ENCODE measurements at regions of chr17 and their contacts with region 1.

Region 1: GRCh38 chr17:45021607-45022287 is 29.7 kb downstream of the DCAKD start:
- DNase-seq: peak; percentile 62 to 72
- H3K4me3 ChIP-seq: peak overlapping the region in 1 of 3 donors; percentile 26
- H3K27ac ChIP-seq: peak overlapping the region in 2 of 3 donors; percentile 52 to 71
- H3K4me1 ChIP-seq: peaks cover 28 to 42% of the 10 kb centered on the region in 2 donors
- H3K27me3 ChIP-seq: no peaks in the 10 kb centered on the region
- CTCF ChIP-seq: peak; percentile 28 to 98 (median 84)
- POLR2A ChIP-seq: peak in 1 of 2 donors; percentile 20

Region 2: GRCh38 chr17:44775136-44775837 is 246.5 kb before region 1 on chr17:
- intact Hi-C with region 1: loop called (anchors 5 kb)
- DNase-seq: peak; percentile 97 to 98
- H3K4me3 ChIP-seq: peak overlapping the region in 2 of 3 donors; percentile 19 to 42
- H3K27ac ChIP-seq: no peak overlapping the region
- H3K4me1 ChIP-seq: peaks cover 13 to 22% of the 10 kb centered on the region in 2 donors
- H3K27me3 ChIP-seq: no peaks in the 10 kb centered on the region
- CTCF ChIP-seq: peak in 1 of 6 experiments; percentile 11
- POLR2A ChIP-seq: peak in 1 of 2 donors; percentile 25

Region 3: GRCh38 chr17:44906010-44906646 is 115.6 kb before region 1 on chr17:
- intact Hi-C with region 1: no loop called
- DNase-seq: no peak
- H3K4me3 ChIP-seq: no peak overlapping the region
- H3K27ac ChIP-seq: no peak overlapping the region
- H3K4me1 ChIP-seq: peaks cover 9 to 19% of the 10 kb centered on the region in 2 donors
- H3K27me3 ChIP-seq: no peaks in the 10 kb centered on the region
- CTCF ChIP-seq: no peak
- POLR2A ChIP-seq: no peak

Region 4: GRCh38 chr17:44919885-44920564 is 101.7 kb before region 1 on chr17:
- intact Hi-C with region 1: loop called (anchors 5 kb)
- DNase-seq: peak; percentile 92 to 93
- H3K4me3 ChIP-seq: no peak overlapping the region
- H3K27ac ChIP-seq: no peak overlapping the region
- H3K4me1 ChIP-seq: peaks cover 7 to 34% of the 10 kb centered on the region in 2 donors
- H3K27me3 ChIP-seq: no peaks in the 10 kb centered on the region
- CTCF ChIP-seq: peak; percentile 52 to 93 (median 86)
- POLR2A ChIP-seq: no peak

Region 5: DNA sequence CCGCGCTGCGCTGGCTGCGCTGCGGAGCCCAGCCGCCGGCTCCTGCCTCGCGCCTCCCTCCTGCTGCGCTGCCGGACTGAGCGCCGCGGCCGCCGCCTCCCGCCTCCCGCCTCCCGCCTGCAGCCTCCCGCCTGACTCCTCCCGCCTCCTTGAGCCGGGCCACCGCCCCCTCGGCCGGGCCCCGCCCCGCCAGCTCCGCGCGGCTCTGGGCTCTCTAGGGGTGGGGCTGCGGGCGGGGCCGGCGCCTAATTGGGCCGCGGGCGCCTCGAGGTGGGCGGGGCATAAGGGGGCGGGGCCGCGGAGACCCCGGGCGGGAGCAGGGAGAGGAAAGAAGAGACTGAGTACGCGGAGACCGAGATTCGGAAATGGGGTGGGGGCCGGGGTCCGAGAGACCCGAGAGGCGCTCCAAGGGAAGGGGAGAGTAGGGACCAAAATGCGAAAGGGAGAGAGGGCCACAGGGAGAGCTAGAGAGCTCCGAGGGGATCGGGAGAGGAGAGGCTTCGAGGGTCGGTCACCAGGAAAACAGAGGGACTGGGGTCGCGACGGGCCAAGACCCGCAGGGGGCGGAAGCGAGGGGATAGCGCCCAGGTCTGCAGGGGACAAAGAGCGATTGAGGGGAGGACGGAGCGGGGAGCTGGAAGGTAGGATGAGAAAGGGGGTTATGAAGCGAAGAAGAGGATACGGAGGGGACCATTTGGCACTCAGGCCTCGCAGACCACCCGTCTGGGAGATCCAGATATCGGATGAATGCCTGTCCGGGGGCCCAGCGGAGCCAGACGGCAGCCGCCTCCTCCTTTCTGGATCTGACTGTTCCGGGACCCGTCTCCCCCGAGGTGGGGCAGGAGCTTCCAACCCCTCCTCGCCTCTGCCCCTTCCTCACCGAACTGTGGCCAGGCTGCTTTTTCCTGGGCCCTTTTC is 53.3 kb before region 1 on chr17 and contains the start of gene C1QL1:
- intact Hi-C with region 1: loop called (anchors 10 kb)
- DNase-seq: peak; percentile 90 to 93
- H3K4me3 ChIP-seq: peak within 1 kb of the TSS in 1 of 3 donors; percentile 23
- H3K27ac ChIP-seq: no peak within 1 kb of the TSS
- H3K4me1 ChIP-seq: peaks cover 16 to 35% of the 10 kb centered on the region in 2 donors
- H3K27me3 ChIP-seq: peaks cover 10% of the 10 kb centered on the region
- CTCF ChIP-seq: peak in 1 of 6 experiments; percentile 10
- POLR2A ChIP-seq: peak in 1 of 2 donors; percentile 41
- total RNA-seq, gene C1QL1: 0.59 to 0.75 TPM in 2 of 4 donors, not detected in the others

Region 6: DNA sequence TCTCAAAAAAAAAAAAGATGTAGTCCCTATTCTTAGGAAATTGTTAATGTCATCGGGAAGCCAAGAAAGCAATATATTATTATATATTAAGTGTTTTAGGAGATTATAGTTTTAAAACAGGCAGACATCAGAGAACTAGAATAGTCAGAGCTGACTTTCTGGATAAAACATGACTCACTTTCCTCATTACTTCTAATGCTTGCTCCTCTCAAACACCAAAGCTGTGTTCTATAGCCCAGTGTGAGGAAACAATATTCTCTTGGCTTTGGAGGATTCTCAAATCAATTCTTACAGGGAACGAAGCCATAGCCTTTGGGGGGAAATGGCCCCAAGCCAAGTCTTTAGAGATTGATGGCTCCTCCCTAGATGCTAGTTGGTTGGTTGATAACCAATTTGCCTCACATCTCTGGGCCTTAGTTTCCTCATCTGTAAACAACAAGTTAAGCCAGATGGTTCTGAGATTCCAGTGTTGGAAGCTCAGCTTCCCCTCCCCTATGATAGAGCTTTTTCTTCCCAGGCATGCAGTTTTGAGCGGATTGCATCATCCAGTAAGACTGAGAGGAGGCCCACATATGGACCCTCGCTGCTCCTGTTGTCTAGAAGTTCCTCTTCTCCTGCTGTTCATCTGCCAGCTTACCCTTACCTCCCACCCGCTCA is 51.8 kb after region 1 on chr17:
- intact Hi-C with region 1: no loop called
- DNase-seq: no peak
- H3K4me3 ChIP-seq: no peak overlapping the region
- H3K27ac ChIP-seq: peak overlapping the region in 1 of 3 donors; percentile 17
- H3K4me1 ChIP-seq: peaks cover 17 to 42% of the 10 kb centered on the region in 2 donors
- H3K27me3 ChIP-seq: no peaks in the 10 kb centered on the region
- CTCF ChIP-seq: no peak
- POLR2A ChIP-seq: no peak

Region 7: DNA sequence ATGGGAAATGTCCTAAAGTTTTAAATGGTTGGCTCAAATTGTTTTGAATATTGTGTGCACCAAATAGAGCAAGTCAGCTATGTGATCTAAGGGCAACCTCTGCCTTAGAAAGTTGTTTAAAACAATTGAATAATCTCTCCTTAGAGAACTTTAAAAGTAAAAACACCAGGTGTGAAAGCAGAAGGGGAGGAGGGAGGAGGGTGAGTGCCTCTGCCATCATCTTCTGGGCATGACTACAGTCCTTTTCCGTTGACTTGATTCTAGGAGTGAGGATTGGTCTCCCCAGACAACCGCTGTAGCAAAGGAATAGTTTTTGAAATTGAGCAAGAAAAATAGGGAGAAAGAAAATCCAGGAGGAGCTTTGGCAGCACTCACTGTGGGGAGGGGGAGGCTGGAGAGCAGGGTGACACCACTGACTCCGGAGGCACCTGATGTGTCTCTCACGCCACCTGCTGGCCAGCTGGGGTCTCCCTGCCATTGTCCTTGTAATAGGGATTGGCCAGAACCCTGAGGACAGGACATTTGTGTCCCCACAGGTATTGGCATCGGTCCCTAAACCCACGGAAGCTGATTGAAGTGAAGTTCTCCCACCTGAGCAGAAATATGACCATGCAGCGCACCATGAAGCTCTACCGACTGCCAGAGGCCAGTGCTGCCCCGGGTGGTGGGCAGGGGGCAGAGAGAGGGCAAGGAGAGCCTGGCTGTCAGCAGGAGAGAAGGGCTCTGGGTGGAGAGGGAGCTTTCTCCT is 77.3 kb after region 1 on chr17:
- intact Hi-C with region 1: loop called (anchors 5 kb)
- DNase-seq: peak; percentile 94
- H3K4me3 ChIP-seq: no peak overlapping the region
- H3K27ac ChIP-seq: peak overlapping the region in 1 of 3 donors; percentile 32
- H3K4me1 ChIP-seq: peaks cover 0 to 36% of the 10 kb centered on the region in 2 donors
- H3K27me3 ChIP-seq: no peaks in the 10 kb centered on the region
- CTCF ChIP-seq: peak; percentile 89 to 95 (median 92)
- POLR2A ChIP-seq: no peak